ENCODE measurements at regions of chr9 and their contacts with region 1.

Region 1: GRCh38 chr9:36956908-36957307 is 77.2 kb downstream of the PAX5 start:
- DNase-seq: no peak
- ATAC-seq: peak; percentile 97
- H3K4me3 Mint-ChIP-seq: no peak overlapping the region
- H3K27ac Mint-ChIP-seq: no peak overlapping the region
- H3K4me1 Mint-ChIP-seq: peaks cover 22% of the 10 kb centered on the region
- H3K27me3 Mint-ChIP-seq: no peaks in the 10 kb centered on the region; the same call in 1 of the 2 replicates
- CTCF ChIP-seq: no peak

Region 2: DNA sequence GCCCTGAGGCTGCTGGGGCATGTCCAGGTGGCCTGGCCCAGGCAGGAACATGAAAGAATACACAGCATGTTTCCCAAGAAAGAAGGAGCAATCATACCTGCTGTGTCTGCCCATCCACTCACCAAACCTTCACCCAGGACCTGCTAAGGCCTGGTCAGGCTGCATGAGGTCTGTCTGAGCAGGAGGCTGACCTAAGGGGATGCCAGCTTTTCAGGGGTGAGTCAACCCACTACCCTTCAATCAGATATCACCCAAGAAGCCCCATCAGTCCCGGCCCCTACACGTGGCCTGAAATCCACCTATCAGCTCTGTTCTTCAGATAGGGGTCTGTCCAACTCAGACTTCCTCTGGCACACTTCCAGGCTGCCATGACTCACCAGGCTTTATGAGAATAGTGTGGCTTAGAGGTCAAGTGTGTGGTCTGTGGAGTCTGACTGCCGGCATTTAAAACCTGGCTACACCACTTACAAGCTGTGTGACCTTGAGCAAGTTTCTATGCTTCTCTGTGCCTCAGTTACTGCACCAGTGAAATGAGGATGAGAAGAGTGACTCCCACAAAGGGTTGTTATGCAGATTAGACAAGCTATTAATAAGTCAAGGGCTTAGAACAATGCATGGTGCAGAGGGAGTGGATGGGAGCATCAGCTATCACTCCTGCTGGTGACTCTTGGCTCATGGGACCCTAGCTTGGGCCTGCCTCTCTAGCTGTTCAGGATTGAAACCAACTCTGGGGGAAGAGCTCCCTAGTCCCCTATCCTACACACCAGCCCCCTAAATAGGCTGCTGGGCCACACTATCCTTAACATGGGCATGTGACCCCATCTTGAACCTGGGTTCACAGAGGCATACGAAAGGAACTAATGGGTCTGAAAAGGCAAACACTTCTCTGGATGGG is 53.1 kb before region 1 on chr9:
- CTCF ChIA-PET with region 1: interaction called, 10 read pairs
- POLR2A ChIA-PET with region 1: no interaction called
- DNase-seq: no peak
- ATAC-seq: no peak
- H3K4me3 Mint-ChIP-seq: no peak overlapping the region
- H3K27ac Mint-ChIP-seq: no peak overlapping the region
- H3K4me1 Mint-ChIP-seq: peaks cover 6% of the 10 kb centered on the region
- H3K27me3 Mint-ChIP-seq: peaks cover 4% of the 10 kb centered on the region; the same call in 1 of the 2 replicates
- CTCF ChIP-seq: no peak

Region 3: DNA sequence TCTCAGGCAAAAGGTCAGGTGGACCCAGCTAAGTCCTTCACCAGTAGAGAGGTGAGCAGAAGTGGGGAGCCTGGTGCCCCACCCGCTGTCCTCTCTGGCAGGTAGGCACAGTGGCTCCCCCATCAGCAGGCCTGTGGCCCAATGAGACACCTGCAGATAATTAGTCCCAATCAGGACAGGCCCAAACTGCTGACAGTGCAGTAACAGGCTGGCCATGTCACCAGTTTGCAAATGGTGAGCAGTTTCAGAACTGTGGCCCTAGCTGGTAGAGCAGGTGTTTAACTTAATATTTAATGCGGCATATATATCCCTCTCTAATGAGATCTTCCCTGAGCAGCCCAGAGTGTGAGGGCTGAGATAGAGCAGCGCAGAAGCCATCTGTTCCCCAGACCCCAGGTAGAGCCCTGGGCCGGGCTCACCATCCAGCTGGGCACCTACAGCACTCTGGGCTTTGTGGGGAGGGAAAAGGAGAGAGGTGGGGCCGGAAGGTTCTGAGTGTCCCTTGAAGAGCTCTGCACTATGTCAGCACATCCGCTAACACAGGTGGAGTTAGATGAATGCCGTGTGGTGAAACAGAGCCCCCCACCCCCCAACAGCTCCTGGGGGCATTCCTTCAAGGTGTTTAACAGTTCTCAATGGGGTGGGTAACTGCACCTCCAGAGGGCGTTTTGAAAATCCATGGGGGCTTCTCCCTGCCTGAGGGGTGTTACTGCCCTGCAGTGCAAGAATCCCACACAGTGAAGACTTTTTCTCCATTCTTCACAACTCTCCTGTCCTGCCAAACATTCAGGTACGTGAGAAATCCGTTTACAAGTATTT is 43.3 kb before region 1 on chr9:
- CTCF ChIA-PET with region 1: interaction called, 12 read pairs
- POLR2A ChIA-PET with region 1: no interaction called
- DNase-seq: peak; percentile 46
- ATAC-seq: peak; percentile 88
- H3K4me3 Mint-ChIP-seq: no peak overlapping the region
- H3K27ac Mint-ChIP-seq: no peak overlapping the region
- H3K4me1 Mint-ChIP-seq: peaks cover 8% of the 10 kb centered on the region
- H3K27me3 Mint-ChIP-seq: no peaks in the 10 kb centered on the region
- CTCF ChIP-seq: no peak

Region 4: GRCh38 chr9:36969216-36969771 is 12.4 kb after region 1 on chr9:
- CTCF ChIA-PET with region 1: interaction called, 17 read pairs
- POLR2A ChIA-PET with region 1: no interaction called
- DNase-seq: peak; percentile 63
- ATAC-seq: peak; percentile 89
- H3K4me3 Mint-ChIP-seq: no peak overlapping the region
- H3K27ac Mint-ChIP-seq: no peak overlapping the region
- H3K4me1 Mint-ChIP-seq: no peaks in the 10 kb centered on the region
- H3K27me3 Mint-ChIP-seq: no peaks in the 10 kb centered on the region
- CTCF ChIP-seq: peak; percentile 23; the same call in 1 of the 2 replicates

Region 5: DNA sequence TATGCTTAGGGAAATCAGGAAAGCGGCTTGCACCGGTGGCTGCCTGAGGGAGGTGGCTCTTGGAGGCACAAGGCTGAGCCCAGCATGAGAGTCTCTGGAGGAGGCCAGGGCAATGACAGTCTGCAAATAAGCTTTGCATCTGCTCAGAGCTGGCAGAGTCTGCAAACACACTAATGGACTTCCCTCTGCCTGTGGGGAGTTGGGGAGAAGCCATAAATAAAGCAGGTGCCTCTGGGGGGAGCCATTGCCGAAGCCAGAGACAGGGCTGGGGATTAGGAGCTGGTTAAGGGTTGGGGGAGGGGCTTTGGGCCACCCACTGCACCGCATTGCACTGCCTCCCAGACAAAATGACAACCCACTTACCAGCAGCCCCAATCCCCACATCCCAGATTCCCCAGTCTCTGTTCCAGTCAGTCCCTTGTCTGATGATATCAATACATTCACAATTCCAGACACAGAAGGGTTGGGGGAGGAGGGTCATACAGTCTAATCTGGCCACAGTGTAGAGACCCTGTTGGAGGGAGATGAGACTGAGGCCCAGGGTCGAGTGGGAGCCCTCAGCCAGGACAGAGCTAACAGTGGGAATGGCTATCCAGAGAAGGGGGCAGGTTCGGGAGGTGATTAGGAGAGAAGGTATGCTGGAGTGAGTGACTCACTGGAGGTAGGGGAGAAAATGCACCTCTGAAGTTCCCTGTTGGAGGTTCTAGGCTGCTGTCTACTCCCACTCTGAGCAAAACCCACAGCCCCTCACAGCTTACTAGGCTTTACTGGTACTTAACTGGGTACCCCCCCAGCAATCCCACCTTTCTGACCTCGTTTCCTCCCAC is 23.5 kb after region 1 on chr9:
- CTCF ChIA-PET with region 1: interaction called, 12 read pairs
- POLR2A ChIA-PET with region 1: no interaction called
- DNase-seq: peak; percentile 75
- ATAC-seq: peak; percentile 97
- H3K4me3 Mint-ChIP-seq: no peak overlapping the region
- H3K27ac Mint-ChIP-seq: no peak overlapping the region
- H3K4me1 Mint-ChIP-seq: peaks cover 24% of the 10 kb centered on the region
- H3K27me3 Mint-ChIP-seq: peaks cover 43% of the 10 kb centered on the region
- CTCF ChIP-seq: no peak

Region 6: GRCh38 chr9:37004424-37004935 is 47.6 kb after region 1 on chr9:
- CTCF ChIA-PET with region 1: no interaction called
- POLR2A ChIA-PET with region 1: no interaction called
- DNase-seq: no peak
- ATAC-seq: no peak
- H3K4me3 Mint-ChIP-seq: no peak overlapping the region
- H3K27ac Mint-ChIP-seq: no peak overlapping the region
- H3K4me1 Mint-ChIP-seq: peaks cover 20% of the 10 kb centered on the region
- H3K27me3 Mint-ChIP-seq: peaks cover 48% of the 10 kb centered on the region
- CTCF ChIP-seq: no peak